ENCODE measurements at regions of chr6 and their contacts with region 1.

Region 1: GRCh38 chr6:63635588-63636517 is at the start of gene PHF3:
- DNase-seq: peak; percentile 97
- H3K4me3 Mint-ChIP-seq: peak within 1 kb of the TSS; percentile 100
- H3K27ac Mint-ChIP-seq: peak within 1 kb of the TSS; percentile 100
- H3K4me1 Mint-ChIP-seq: peaks cover 33% of the 10 kb centered on the region
- H3K27me3 Mint-ChIP-seq: peaks cover 7% of the 10 kb centered on the region
- total RNA-seq, gene PHF3: 39.1 and 39.2 TPM in 2 replicates

Region 2: DNA sequence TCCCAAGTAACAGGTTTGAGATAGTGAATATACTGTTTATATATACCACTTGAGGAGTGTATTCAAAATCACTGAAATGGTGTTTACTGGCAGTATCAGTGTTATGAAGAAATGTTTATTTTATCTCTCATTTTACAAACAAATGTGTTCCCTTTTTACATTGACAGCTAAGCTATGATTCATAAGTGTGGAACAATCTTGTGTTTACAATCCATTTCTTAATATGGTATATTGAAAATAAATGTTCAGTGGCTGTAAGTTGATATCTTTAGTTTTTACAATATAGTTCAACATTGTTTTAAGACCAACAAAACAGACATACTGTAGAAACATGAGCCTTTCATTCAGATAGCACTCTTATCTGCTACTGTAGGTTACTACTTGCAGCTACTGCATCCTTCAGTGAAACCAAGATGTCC is 14.0 kb after region 1 on chr6:
- intact Hi-C with region 1: loop called (anchors 2 kb)
- DNase-seq: no peak
- H3K4me3 Mint-ChIP-seq: no peak overlapping the region
- H3K27ac Mint-ChIP-seq: no peak overlapping the region
- H3K4me1 Mint-ChIP-seq: peaks cover 29% of the 10 kb centered on the region
- H3K27me3 Mint-ChIP-seq: no peaks in the 10 kb centered on the region

Region 3: DNA sequence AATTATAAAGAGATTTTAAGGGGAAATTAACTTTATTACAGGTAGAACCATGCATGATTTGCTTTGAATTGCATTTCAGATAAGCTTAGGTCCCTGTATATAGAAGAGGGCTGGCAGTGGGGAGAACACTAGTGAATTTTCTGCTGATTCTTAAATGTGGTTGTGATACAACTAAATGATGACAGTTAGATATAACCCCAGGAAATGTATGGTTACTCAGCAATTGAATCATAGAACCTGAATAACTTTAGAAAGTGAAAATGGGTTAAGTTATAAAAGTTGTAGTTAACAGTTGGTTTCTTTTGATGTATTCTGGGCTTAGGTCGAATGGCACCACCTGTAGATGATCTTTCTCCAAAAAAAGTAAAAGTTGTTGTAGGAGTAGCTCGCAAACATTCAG is 69.9 kb after region 1 on chr6:
- intact Hi-C with region 1: no loop called
- DNase-seq: no peak
- H3K4me3 Mint-ChIP-seq: no peak overlapping the region
- H3K27ac Mint-ChIP-seq: no peak overlapping the region
- H3K4me1 Mint-ChIP-seq: peaks cover 17% of the 10 kb centered on the region
- H3K27me3 Mint-ChIP-seq: no peaks in the 10 kb centered on the region